ENCODE measurements at regions of chr2 and their contacts with region 1.

Region 1: DNA sequence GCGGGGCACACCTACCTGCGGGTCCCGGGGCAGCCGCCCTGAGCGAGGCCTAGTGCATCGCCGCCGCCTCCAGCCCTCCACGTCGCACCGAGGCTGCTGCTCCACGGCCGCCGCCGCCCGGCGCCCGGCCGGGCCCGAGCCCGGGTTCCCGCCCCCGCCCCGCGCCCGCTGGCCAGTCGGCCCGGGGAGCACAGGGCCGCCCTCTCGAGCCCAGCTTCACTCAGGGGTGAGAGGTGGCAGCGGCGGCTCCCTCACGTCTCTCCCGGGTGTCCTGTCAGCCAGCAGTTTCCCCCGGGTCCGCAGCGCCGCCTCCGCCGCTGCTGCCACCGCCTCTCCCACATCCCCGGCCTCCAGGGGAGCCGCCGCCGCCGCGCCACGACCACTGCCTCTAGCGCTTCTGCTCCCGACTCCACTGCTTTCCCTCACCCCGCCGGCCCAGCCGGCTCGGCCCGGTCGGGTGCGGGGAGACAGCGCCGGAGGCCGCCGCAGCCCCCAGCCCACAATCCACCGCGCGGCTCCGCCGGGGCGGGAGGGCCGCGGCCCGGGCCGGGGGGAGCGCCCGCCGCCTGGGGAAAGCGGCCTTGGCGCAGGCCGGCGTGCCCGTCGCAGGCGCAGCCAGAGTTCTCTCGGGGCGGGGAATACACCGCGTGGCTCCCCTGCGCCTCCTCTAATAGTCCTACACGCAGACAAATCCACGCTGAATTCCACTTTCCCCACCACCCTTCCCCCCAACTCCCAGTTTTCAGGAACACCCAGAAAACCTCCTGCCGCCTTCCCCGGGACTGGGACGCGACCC is at the start of gene VPS54:
- DNase-seq: peak; percentile 65
- H3K4me3 Mint-ChIP-seq: peak within 1 kb of the TSS; percentile 98
- H3K27ac Mint-ChIP-seq: peak within 1 kb of the TSS; percentile 96
- H3K4me1 Mint-ChIP-seq: peaks cover 42% of the 10 kb centered on the region
- H3K27me3 Mint-ChIP-seq: no peaks in the 10 kb centered on the region
- total RNA-seq, gene VPS54: 18.8 to 19.2 TPM

Region 2: DNA sequence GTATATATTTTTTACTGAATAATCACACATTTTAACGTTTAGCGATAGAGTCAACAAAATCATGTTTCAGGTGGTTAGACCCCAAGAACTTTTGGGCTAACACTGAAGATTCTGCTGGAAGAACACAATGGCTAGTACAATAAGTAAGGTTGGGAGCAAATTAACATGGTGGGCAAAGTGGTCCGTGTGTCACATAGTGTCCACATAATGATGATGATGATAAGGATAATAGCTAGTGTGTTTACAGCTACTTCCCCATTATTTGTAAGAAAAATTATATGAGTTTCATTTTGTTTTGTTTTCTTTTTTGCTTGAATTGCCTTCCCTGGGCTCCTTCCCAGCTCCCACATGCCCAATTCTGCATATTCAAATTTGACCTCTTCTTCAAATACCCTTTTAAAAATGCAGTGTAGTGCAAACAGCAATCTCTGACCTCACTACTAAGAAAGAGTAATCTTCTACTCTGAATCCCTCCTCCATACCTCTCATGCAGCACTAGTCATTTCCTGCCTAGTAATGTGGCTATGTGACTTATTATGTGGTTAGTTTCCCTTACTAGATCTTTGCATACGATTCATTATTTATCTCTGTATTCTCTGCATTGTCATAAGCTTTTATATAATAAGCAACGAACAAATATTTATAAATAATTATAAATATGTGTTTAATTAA is 17.0 kb after region 1 on chr2:
- CTCF ChIA-PET with region 1: interaction called, 5 read pairs
- POLR2A ChIA-PET with region 1: interaction called, 51 read pairs
- DNase-seq: peak; percentile 25
- H3K4me3 Mint-ChIP-seq: peak overlapping the region; percentile 44
- H3K27ac Mint-ChIP-seq: peak overlapping the region; percentile 92
- H3K4me1 Mint-ChIP-seq: peaks cover 54% of the 10 kb centered on the region
- H3K27me3 Mint-ChIP-seq: no peaks in the 10 kb centered on the region

Region 3: GRCh38 chr2:64243081-64244036 is 224.2 kb after region 1 on chr2:
- CTCF ChIA-PET with region 1: no interaction called
- POLR2A ChIA-PET with region 1: no interaction called
- DNase-seq: no peak
- H3K4me3 Mint-ChIP-seq: no peak overlapping the region
- H3K27ac Mint-ChIP-seq: no peak overlapping the region
- H3K4me1 Mint-ChIP-seq: no peaks in the 10 kb centered on the region
- H3K27me3 Mint-ChIP-seq: peaks cover 15% of the 10 kb centered on the region

Measured in activated CD4-positive, alpha-beta memory T cell treated with anti-CD3 and anti-CD28 coated beads, Interleukin-2, amount 10 ng/mL, durations not matched to agents 7 days and 5 days (primary cell).